ENCODE measurements at regions of chr5 and their contacts with region 1.

Region 1: DNA sequence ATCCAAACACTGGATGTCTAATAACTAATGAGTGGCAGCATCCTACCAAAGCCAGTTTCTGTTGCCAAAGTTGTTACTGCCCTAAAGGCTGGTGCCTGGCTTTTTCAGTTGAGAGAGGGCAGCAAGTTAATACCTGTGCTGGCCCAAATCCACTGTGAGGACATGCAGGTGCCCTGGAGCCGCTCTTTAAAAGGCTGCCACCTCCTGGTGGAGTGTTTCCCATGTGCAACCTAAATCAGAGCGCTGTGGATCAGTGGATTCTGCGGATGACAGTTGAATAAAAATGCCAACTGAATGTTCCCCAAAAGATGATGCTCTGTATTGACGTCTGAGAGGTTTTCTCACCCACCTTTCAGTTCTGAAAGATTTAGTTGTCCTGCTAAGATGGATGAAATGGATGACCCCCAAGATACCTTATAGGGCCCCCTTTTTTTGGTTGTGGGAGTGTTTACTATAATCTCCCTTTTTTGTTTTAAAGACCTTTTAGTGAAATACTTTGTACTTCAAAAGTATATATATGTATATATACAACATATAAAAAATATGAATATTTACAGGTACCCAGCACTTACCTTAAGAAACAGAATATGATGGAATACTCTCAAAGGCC is 146.4 kb downstream of the EGFLAM start:
- DNase-seq: peak in 4 of 9 donors; percentile 5 to 22 (median 8)
- ATAC-seq: no peak
- H3K4me3 ChIP-seq: no peak overlapping the region
- H3K4me3 Mint-ChIP-seq: no peak overlapping the region
- H3K27ac ChIP-seq: no peak overlapping the region
- H3K27ac Mint-ChIP-seq: no peak overlapping the region
- H3K4me1 ChIP-seq: no peaks in the 10 kb centered on the region
- H3K4me1 Mint-ChIP-seq: peaks cover 0 to 1% (median 0%) of the 10 kb centered on the region in 7 donors
- H3K27me3 ChIP-seq: no peaks in the 10 kb centered on the region
- H3K27me3 Mint-ChIP-seq: peaks cover 26 to 40% (median 29%) of the 10 kb centered on the region in 5 donors

Region 2: GRCh38 chr5:38208782-38209378 is 195.9 kb before region 1 on chr5:
- CTCF ChIA-PET with region 1: no interaction called
- POLR2A ChIA-PET with region 1: no interaction called
- intact Hi-C with region 1: loop called in 1 of 2 experiments (anchors 2 kb)
- DNase-seq: peak in 3 of 9 donors; percentile 2 to 9 (median 6)
- ATAC-seq: no peak
- H3K4me3 ChIP-seq: no peak overlapping the region
- H3K4me3 Mint-ChIP-seq: no peak overlapping the region
- H3K27ac ChIP-seq: no peak overlapping the region
- H3K27ac Mint-ChIP-seq: no peak overlapping the region
- H3K4me1 ChIP-seq: no peaks in the 10 kb centered on the region
- H3K4me1 Mint-ChIP-seq: peaks cover 0 to 2% (median 0%) of the 10 kb centered on the region in 7 donors
- H3K27me3 ChIP-seq: no peaks in the 10 kb centered on the region
- H3K27me3 Mint-ChIP-seq: peaks cover 0 to 35% (median 13%) of the 10 kb centered on the region in 5 donors

Region 3: DNA sequence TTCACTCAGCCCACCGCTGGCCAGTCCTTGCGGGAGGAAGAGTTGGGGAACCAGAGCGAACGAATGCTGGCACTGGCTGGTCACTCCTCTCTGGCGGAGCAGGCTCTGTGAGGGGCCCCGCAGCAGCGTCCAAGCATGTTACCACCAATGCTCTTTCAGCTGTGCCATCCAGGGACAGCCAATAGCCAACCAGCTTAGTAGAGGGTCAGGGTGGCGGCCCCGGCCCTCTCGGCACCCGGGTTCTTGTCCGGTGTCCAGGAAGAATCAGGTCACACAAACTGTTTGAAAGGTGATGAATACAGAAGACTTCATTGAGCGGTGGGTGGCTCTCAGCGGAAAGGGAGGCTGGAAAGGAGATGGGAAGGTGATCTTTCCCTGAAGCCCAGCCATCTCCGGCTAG is 11.1 kb before region 1 on chr5:
- CTCF ChIA-PET with region 1: no interaction called
- POLR2A ChIA-PET with region 1: no interaction called
- intact Hi-C with region 1: no loop called
- DNase-seq: no peak
- ATAC-seq: no peak
- H3K4me3 ChIP-seq: no peak overlapping the region
- H3K4me3 Mint-ChIP-seq: no peak overlapping the region
- H3K27ac ChIP-seq: no peak overlapping the region
- H3K27ac Mint-ChIP-seq: no peak overlapping the region
- H3K4me1 ChIP-seq: no peaks in the 10 kb centered on the region
- H3K4me1 Mint-ChIP-seq: no peaks in the 10 kb centered on the region
- H3K27me3 ChIP-seq: peaks cover 0 to 5% of the 10 kb centered on the region in 2 donors
- H3K27me3 Mint-ChIP-seq: peaks cover 7 to 29% (median 18%) of the 10 kb centered on the region in 5 donors